ENCODE measurements at regions of chr17 and their contacts with region 1.

Region 1: DNA sequence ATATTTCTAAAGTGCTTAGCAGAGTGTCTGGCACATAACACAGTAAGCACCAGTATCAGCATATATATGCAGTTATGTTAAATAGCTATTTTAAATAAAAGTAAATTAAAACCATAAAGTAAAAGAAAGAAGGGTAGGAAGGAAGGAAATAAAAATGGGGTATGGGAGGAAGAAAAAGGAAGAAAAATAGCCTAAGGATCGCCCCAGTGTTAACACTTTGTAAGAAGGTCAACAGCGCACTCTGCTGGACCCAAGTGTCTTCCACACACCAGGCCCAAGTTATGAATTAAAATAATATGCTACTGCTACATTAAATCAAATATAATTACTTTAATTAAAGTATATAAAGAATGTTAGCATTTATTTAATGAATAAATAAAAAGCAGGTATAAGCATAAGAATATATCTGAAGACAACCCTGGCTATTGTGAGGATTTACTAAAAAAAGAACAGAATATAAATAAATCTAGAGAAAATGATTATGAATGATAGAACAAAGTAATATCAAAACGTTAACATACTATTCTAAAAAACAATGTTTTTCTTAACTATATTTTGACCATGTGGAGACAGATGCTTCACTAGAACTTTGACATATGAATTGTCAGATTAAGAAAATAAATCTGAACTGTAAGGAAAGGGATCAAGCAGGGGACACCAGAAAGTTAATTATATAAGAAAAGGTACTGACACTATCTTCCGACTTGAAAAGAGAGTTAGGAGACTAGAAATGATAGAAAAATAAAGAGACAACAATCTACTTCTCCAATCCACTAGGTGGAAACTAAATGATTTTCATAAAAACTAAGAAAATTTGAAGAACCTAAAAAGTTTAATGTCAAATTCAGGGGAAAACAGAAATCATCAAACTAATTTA is 25.9 kb downstream of the BRIP1 start:
- DNase-seq: peak; percentile 60
- H3K4me3 ChIP-seq: no peak overlapping the region
- H3K27ac ChIP-seq: no peak overlapping the region
- H3K4me1 ChIP-seq: no peaks in the 10 kb centered on the region
- H3K27me3 ChIP-seq: no peaks in the 10 kb centered on the region
- CTCF ChIP-seq: peak; percentile 55 to 73 (median 68)
- EP300 ChIP-seq: no peak
- POLR2A ChIP-seq: no peak

Region 2: GRCh38 chr17:61412143-61412859 is 425.1 kb before region 1 on chr17:
- in situ Hi-C with region 1: loop called in 1 of 4 experiments (anchors 25 kb)
- intact Hi-C with region 1: loop called (anchors 10 kb)
- DNase-seq: peak; percentile 83
- H3K4me3 ChIP-seq: peak overlapping the region; percentile 39 to 57 (median 50)
- H3K27ac ChIP-seq: peak overlapping the region; percentile 59 to 77 (median 70)
- H3K4me1 ChIP-seq: peaks cover 13 to 50% (median 42%) of the 10 kb centered on the region in 4 donors
- H3K27me3 ChIP-seq: peaks cover 60% of the 10 kb centered on the region
- CTCF ChIP-seq: peak; percentile 97 to 99 (median 98)
- EP300 ChIP-seq: no peak
- POLR2A ChIP-seq: no peak

Region 3: DNA sequence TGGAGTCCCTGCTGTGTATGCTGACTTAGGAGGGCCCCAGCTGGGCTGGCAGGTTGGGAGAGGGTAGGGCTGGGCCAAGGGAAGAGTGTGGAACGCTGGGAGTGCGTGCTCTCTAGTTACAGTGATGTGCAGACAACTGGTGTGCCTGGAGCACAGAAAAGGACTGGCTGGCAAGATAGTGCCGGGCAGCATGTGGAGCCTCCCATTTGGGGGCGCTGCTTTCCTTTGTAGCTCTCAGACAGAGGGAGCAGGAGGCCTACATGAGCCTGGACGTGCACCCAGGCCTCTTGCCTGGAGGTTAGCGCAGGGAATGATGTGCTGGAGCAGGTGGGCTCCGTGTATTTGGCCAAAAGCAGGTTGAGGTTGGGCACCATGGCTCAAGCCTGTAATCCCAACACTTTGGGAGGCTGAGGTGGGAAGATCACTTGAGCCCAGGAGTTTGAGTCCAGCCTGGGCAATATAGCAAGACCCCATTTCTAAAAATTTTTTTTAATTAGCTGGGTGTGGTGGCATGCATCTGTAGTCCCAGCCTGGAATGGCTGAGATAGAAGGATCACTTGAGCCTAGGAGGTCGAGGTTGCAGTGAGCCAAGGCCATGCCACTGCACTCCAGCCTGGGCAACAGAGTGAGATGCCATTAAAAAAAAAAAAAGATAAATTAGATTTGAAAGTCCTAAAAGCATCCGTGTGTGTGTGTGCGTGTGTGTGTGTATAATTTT is 411.2 kb before region 1 on chr17:
- in situ Hi-C with region 1: loop called (anchors 25 kb)
- intact Hi-C with region 1: no loop called
- DNase-seq: no peak
- H3K4me3 ChIP-seq: no peak overlapping the region
- H3K27ac ChIP-seq: no peak overlapping the region
- H3K4me1 ChIP-seq: no peaks in the 10 kb centered on the region
- H3K27me3 ChIP-seq: peaks cover 47% of the 10 kb centered on the region
- CTCF ChIP-seq: peak in 2 of 5 experiments; percentile 9 to 16
- EP300 ChIP-seq: no peak
- POLR2A ChIP-seq: no peak

Region 4: GRCh38 chr17:61486135-61487120 is 351.0 kb before region 1 on chr17:
- in situ Hi-C with region 1: no loop called
- intact Hi-C with region 1: no loop called
- DNase-seq: no peak
- H3K4me3 ChIP-seq: no peak overlapping the region
- H3K27ac ChIP-seq: no peak overlapping the region
- H3K4me1 ChIP-seq: peaks cover 0 to 21% (median 8%) of the 10 kb centered on the region in 4 donors
- H3K27me3 ChIP-seq: no peaks in the 10 kb centered on the region
- CTCF ChIP-seq: no peak
- EP300 ChIP-seq: no peak
- POLR2A ChIP-seq: no peak

Region 5: GRCh38 chr17:61635913-61636432 is 201.4 kb before region 1 on chr17:
- in situ Hi-C with region 1: loop called (anchors 5 to 25 kb)
- intact Hi-C with region 1: no loop called
- DNase-seq: peak; percentile 45
- H3K4me3 ChIP-seq: no peak overlapping the region
- H3K27ac ChIP-seq: no peak overlapping the region
- H3K4me1 ChIP-seq: no peaks in the 10 kb centered on the region
- H3K27me3 ChIP-seq: peaks cover 25% of the 10 kb centered on the region
- CTCF ChIP-seq: peak; percentile 44 to 64 (median 53)
- EP300 ChIP-seq: no peak
- POLR2A ChIP-seq: no peak

Region 6: DNA sequence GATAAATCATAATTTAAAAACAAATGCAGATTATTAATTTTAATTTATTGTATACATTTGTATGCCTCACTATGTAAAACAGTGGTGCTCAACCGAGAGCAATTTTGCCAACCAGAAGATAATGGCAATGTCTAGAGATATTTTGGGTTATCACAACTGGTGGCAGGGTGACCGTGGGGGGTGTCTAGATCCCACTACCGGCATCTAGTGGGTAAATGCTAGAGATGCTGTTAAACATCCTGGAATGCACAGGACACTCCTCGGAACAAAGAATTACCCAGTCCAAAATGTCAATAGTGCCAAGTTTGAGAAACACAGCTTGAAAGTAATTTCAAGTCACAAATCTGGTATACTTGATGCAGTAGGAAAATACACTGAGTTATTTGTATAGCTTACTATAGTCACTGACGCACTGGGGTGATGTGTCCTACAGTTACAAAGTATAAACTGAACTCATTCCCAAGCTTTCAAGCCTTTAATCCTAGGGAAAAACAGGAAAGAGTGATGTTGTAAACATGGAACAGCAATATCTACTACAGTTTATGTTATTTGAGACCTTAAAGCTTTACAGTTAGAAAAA is 107.6 kb before region 1 on chr17:
- in situ Hi-C with region 1: loop called in 1 of 4 experiments (anchors 25 kb)
- intact Hi-C with region 1: no loop called
- DNase-seq: no peak
- H3K4me3 ChIP-seq: no peak overlapping the region
- H3K27ac ChIP-seq: no peak overlapping the region
- H3K4me1 ChIP-seq: no peaks in the 10 kb centered on the region
- H3K27me3 ChIP-seq: no peaks in the 10 kb centered on the region
- CTCF ChIP-seq: no peak
- EP300 ChIP-seq: no peak
- POLR2A ChIP-seq: no peak

Region 7: GRCh38 chr17:61783556-61784304 is 53.7 kb before region 1 on chr17:
- in situ Hi-C with region 1: no loop called
- intact Hi-C with region 1: no loop called
- DNase-seq: no peak
- H3K4me3 ChIP-seq: no peak overlapping the region
- H3K27ac ChIP-seq: no peak overlapping the region
- H3K4me1 ChIP-seq: no peaks in the 10 kb centered on the region
- H3K27me3 ChIP-seq: no peaks in the 10 kb centered on the region
- CTCF ChIP-seq: no peak
- EP300 ChIP-seq: no peak
- POLR2A ChIP-seq: no peak

Region 8: GRCh38 chr17:61862975-61863800 is 25.8 kb after region 1 on chr17 and contains the start of gene BRIP1:
- in situ Hi-C with region 1: no loop called
- intact Hi-C with region 1: no loop called
- DNase-seq: peak; percentile 92
- H3K4me3 ChIP-seq: peak within 1 kb of the TSS; percentile 49 to 94 (median 81)
- H3K27ac ChIP-seq: peak within 1 kb of the TSS; percentile 73 to 95 (median 89)
- H3K4me1 ChIP-seq: peaks cover 0 to 22% (median 13%) of the 10 kb centered on the region in 4 donors
- H3K27me3 ChIP-seq: no peaks in the 10 kb centered on the region
- CTCF ChIP-seq: no peak
- EP300 ChIP-seq: no peak
- POLR2A ChIP-seq: peak; percentile 53
- total RNA-seq, gene BRIP1: 0.80 to 1.9 (median 1.2) TPM